Breast epithelium (tissue), 4 donors: ENCODE measurements at regions of chr18 and their contacts with region 1.

Region 1: DNA sequence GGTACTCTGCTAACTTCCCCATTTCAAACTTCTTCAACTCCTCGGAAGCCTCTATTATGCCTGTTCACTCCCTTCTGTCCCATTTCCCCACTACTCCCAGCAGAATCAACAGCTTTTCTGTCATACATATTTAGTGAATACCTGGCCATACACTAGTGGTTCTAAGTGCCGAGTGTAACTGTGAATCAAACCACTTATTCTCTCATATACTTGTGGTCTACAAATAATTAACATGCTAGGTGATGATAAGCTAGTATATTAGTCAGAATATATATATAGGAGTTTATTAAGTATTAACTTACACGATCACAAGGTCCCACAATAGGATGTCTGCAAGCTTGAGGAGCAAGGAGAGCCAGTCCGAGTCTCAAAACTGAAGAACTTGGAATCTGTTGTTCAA is 150.7 kb downstream of the CCDC102B start:
- DNase-seq: no peak
- H3K4me3 ChIP-seq: no peak overlapping the region
- H3K27ac ChIP-seq: no peak overlapping the region
- H3K4me1 ChIP-seq: no peaks in the 10 kb centered on the region
- H3K27me3 ChIP-seq: no peaks in the 10 kb centered on the region
- CTCF ChIP-seq: no peak
- POLR2A ChIP-seq: no peak

Region 2: GRCh38 chr18:68925268-68925667 is 23.4 kb before region 1 on chr18:
- intact Hi-C with region 1: loop called (anchors 2 kb)
- DNase-seq: no peak
- H3K4me3 ChIP-seq: no peak overlapping the region
- H3K27ac ChIP-seq: no peak overlapping the region
- H3K4me1 ChIP-seq: no peaks in the 10 kb centered on the region
- H3K27me3 ChIP-seq: no peaks in the 10 kb centered on the region
- CTCF ChIP-seq: no peak
- POLR2A ChIP-seq: no peak

Region 3: DNA sequence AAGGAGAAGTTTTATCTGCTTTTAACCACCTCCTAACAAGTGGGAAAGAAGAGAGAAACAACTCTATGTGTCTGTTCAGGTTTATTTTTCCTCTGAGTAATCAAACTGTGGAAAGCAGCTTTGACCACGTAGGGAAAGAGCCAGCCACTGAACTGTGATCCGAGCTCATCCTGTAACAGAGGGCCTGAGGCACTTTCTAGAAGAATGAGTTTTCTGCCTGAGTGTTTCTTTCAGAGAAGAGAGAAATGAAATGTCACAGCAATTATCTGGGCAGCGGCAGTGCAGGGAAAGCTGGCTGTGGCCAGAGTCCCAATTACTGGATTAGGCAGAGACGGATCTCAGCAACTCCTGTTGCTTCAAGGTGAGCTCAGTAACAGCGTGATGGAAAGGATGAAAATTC is 847.2 kb after region 1 on chr18:
- intact Hi-C with region 1: loop called (anchors 5 kb)
- DNase-seq: no peak
- H3K4me3 ChIP-seq: no peak overlapping the region
- H3K27ac ChIP-seq: no peak overlapping the region
- H3K4me1 ChIP-seq: no peaks in the 10 kb centered on the region
- H3K27me3 ChIP-seq: no peaks in the 10 kb centered on the region
- CTCF ChIP-seq: no peak
- POLR2A ChIP-seq: no peak